HepG2 (cell line): ENCODE measurements at regions of chr10 and their contacts with region 1.

Region 1: DNA sequence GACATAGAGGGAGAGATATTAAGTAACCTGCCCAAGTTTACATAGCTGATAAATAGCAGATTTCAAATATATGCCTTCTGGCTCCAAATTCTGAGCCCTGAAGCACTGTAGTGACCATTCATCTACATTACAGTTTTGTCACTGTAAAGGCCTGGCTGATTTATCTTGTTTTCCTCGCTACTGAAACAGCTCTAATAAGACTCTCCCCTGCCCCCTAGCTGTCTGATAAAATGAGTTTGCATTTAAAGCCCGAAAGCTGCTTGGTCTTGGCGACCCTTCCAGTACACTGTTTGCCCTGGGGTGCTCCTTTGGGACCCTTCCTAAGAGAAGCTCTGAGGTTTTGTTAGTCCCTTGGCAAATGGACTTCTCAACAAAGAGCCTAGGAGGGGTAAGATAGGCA is 59.7 kb upstream of the RAB11FIP2 start:
- DNase-seq: peak; percentile 20
- ATAC-seq: peak; percentile 58
- H3K4me3 ChIP-seq: no peak overlapping the region
- H3K27ac ChIP-seq: no peak overlapping the region
- H3K4me1 ChIP-seq: no peaks in the 10 kb centered on the region
- H3K27me3 ChIP-seq: no peaks in the 10 kb centered on the region; a peak in 1 of 5 replicates
- CTCF ChIP-seq: peak; percentile 59
- EP300 ChIP-seq: no peak
- POLR2A ChIP-seq: no peak
- RAD21 ChIP-seq: 0 out of 2 replicates have a peak, but pooled peaks have one; percentile 23

Region 2: DNA sequence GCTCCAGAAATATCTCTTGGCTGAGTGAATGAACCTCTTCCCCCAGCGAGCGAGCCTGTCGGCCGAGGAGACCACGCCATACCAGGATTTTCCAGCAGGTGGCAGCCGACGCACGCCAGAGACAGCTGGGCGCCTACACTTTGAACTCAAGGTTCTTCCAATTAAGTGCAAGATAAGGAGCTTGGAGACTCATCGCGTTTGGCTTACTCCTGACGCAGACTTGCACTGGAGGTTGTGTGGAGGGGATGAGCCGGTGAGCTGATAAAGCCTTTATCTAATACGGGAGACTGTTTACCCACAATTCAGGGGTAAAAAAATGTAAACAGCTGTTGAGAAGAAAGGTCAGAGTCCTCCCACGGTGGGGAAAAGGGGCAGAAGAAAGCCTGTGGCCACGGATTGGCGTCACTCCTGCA is 609.8 kb before region 1 on chr10:
- CTCF ChIA-PET with region 1: no interaction called
- POLR2A ChIA-PET with region 1: no interaction called
- in situ Hi-C with region 1: no loop called
- intact Hi-C with region 1: loop called (anchors 5 kb)
- DNase-seq: peak; percentile 60
- ATAC-seq: peak; percentile 75
- H3K4me3 ChIP-seq: peak overlapping the region in 1 of 3 experiments; percentile 17; a peak in 1 of 6 replicates
- H3K27ac ChIP-seq: peak overlapping the region; percentile 21
- H3K4me1 ChIP-seq: peaks cover 28% of the 10 kb centered on the region
- H3K27me3 ChIP-seq: 0 out of 5 replicates have a peak, but pooled peaks cover 0 to 5% of the 10 kb centered on the region in 2 experiments
- CTCF ChIP-seq: peak; percentile 91
- EP300 ChIP-seq: no peak; a peak in 2 of 4 replicates
- POLR2A ChIP-seq: no peak
- RAD21 ChIP-seq: peak; percentile 70

Region 3: DNA sequence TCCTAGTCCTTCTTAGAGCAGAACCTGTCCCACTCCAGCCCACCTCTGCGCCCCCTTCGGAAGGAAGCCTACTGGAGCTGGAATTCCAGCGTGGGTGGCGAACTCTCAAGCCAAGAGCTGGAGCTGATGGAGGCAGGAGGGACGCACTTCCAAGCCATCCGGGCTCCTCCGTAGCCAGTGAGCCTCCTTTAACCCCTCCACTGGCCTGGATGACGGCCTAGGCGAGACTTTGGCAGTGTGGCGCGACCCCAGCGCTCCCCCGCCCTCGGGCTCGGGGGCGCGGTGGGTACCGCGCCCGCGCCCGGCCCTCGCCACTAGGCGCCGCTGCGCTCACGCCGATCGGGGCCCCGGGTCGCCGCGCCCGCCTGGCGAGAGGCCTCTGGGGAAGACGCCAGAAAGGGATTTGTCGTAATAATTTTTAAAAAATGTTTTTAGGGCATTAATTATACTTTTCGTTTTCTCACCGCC is 569.0 kb before region 1 on chr10:
- CTCF ChIA-PET with region 1: interaction called, 5 read pairs
- POLR2A ChIA-PET with region 1: no interaction called
- in situ Hi-C with region 1: loop called (anchors 25 kb)
- intact Hi-C with region 1: loop called (anchors 5 kb)
- DNase-seq: no peak
- ATAC-seq: peak; percentile 78
- H3K4me3 ChIP-seq: peak overlapping the region in 1 of 3 experiments; percentile 50; a peak in 1 of 6 replicates
- H3K27ac ChIP-seq: no peak overlapping the region
- H3K4me1 ChIP-seq: 0 out of 2 replicates have a peak, but pooled peaks cover 17% of the 10 kb centered on the region
- H3K27me3 ChIP-seq: peaks cover 14 to 93% of the 10 kb centered on the region in 2 experiments
- CTCF ChIP-seq: peak; percentile 63; the same call in 1 of the 2 replicates
- EP300 ChIP-seq: no peak
- POLR2A ChIP-seq: no peak
- RAD21 ChIP-seq: peak; percentile 79

Region 4: DNA sequence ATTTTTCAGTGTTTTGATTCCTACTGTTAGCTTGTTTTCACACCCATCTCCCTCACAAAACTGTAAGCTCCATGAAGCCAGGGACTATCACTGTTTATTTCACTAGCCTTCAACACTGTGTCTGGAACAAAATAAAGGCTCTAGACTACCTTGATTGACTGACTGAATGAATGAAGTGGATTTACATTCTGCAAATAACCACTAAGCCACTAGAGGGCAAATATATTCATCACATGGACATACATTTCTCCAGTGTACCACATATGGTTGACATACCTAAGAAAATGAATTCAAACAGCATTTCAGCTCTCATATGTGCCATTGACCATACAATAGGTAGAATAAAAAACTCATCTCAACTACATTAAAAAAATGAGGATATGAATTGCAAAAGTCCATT is 245.6 kb before region 1 on chr10:
- CTCF ChIA-PET with region 1: no interaction called
- POLR2A ChIA-PET with region 1: no interaction called
- in situ Hi-C with region 1: no loop called
- intact Hi-C with region 1: loop called (anchors 2 kb)
- DNase-seq: peak; percentile 15
- ATAC-seq: peak; percentile 59
- H3K4me3 ChIP-seq: no peak overlapping the region
- H3K27ac ChIP-seq: no peak overlapping the region
- H3K4me1 ChIP-seq: no peaks in the 10 kb centered on the region
- H3K27me3 ChIP-seq: peaks cover 0 to 5% of the 10 kb centered on the region in 2 experiments; a peak in 1 of 5 replicates
- CTCF ChIP-seq: peak; percentile 29; the same call in 1 of the 2 replicates
- EP300 ChIP-seq: no peak
- POLR2A ChIP-seq: no peak
- RAD21 ChIP-seq: 0 out of 2 replicates have a peak, but pooled peaks have one; percentile 11

Region 5: DNA sequence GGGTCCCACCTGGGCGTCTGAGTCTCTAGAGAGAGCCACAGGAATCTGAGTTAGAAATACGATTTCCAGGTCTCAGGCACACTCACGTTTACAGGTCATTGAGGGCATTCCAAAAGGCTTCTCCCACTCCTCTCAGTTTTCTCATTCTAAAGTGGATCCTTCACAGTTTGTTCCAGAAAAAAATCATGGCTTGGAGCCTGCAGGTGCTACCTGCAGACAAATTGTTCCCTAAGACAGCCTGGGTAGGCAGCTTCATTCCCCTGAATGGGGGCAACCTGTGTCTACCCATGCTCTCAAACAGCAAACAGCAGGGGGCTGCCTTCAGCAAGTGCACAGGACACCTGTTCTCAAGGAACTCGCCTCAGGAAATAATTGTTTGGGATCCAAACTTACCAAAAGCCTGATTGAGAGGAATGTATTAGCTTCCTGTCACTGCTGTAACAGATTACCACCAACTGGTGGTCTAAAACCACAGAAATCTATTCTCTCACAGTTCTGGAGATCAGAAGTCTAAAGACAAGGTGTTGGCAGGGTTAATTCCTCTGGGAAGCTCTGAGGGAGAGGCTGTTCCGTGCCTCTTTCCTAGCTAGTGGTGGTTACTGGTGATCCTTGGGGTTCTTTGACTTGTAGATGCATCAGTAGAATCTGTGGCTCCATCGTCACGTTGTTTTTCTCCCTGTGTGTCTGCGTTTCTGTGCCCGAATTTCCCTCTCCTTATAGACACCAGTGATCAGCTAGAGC is 176.9 kb before region 1 on chr10:
- CTCF ChIA-PET with region 1: no interaction called
- POLR2A ChIA-PET with region 1: no interaction called
- in situ Hi-C with region 1: no loop called
- intact Hi-C with region 1: loop called (anchors 2 kb)
- DNase-seq: peak; percentile 2
- ATAC-seq: 0 out of 3 replicates have a peak, but pooled peaks have one; percentile 33
- H3K4me3 ChIP-seq: no peak overlapping the region
- H3K27ac ChIP-seq: no peak overlapping the region
- H3K4me1 ChIP-seq: no peaks in the 10 kb centered on the region
- H3K27me3 ChIP-seq: no peaks in the 10 kb centered on the region
- CTCF ChIP-seq: peak; percentile 21; the same call in 1 of the 2 replicates
- EP300 ChIP-seq: no peak
- POLR2A ChIP-seq: no peak
- RAD21 ChIP-seq: no peak